AG04449 (cell line): ENCODE measurements at regions of chr7 and their contacts with region 1.

Region 1: DNA sequence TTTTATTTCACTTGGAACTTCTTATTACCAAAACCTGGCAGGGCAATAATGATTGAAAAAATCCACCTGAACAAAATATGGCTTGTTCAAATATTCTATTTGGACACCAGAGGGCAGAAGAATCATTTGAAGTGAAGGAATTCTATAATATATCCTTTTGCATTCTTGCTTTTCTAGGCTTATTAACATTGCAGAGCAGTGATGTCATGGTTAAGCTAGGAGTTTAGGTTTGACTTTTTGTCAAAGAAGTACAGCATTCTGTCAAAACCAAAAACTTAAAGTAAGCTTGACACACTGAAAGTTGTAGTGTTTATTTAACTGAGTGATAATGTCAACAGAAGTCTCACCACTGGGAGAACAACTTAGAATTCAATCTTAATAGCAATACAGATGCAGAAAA is 156.0 kb downstream of the SEMA3D start:
- DNase-seq: peak; percentile 26
- H3K4me3 ChIP-seq: no peak overlapping the region
- CTCF ChIP-seq: peak; percentile 8

Region 2: GRCh38 chr7:85014936-85015660 is 15.8 kb before region 1 on chr7:
- CTCF ChIA-PET with region 1: no interaction called
- POLR2A ChIA-PET with region 1: no interaction called
- DNase-seq: no peak
- H3K4me3 ChIP-seq: no peak overlapping the region
- CTCF ChIP-seq: no peak

Region 3: DNA sequence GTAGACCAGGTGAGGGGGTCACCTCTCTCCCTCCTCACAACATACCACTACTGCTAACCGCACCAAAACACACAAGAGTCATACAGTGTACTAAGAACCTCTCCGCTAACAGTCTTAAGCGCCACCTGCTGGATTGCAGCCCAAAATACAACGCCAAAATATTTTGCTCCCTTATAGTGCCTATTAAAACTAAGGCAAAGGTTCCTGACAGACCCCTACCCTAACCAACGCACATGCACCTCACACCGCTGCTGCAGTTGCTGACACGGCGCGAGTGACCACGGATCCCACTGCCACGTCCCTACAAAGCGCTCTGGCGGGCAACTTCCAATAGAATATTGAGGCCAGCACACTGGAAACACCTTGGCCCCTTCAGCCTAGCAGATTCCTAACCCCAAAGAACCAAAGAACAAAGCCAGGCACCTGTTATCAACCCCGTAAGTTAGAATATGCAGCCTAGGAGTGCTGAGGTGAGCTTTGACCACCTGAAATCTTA is 719.6 kb after region 1 on chr7:
- CTCF ChIA-PET with region 1: interaction called, 50 read pairs
- POLR2A ChIA-PET with region 1: no interaction called
- DNase-seq: no peak
- H3K4me3 ChIP-seq: no peak overlapping the region
- CTCF ChIP-seq: peak; percentile 67

Region 4: GRCh38 chr7:85829817-85830432 is 799.0 kb after region 1 on chr7:
- CTCF ChIA-PET with region 1: interaction called, 130 read pairs
- POLR2A ChIA-PET with region 1: no interaction called
- DNase-seq: no peak
- H3K4me3 ChIP-seq: no peak overlapping the region
- CTCF ChIP-seq: peak; percentile 17

Region 5: GRCh38 chr7:85851571-85852193 is 820.8 kb after region 1 on chr7:
- CTCF ChIA-PET with region 1: interaction called, 79 read pairs
- POLR2A ChIA-PET with region 1: no interaction called
- DNase-seq: peak; percentile 17
- H3K4me3 ChIP-seq: no peak overlapping the region
- CTCF ChIP-seq: peak; percentile 20